Activated CD4-positive, alpha-beta T cell treated with anti-CD3 and anti-CD28 coated beads for 36 hours (primary cell): ENCODE measurements at regions of chr2 and their contacts with region 1.

Region 1: GRCh38 chr2:179031731-179032408 is 18.1 kb downstream of the CCDC141 start:
- DNase-seq: peak; percentile 57
- ATAC-seq: peak; percentile 95
- H3K4me3 Mint-ChIP-seq: peak overlapping the region; percentile 69
- H3K27ac Mint-ChIP-seq: peak overlapping the region; percentile 96
- H3K4me1 Mint-ChIP-seq: peaks cover 28% of the 10 kb centered on the region
- H3K27me3 Mint-ChIP-seq: no peaks in the 10 kb centered on the region

Region 2: GRCh38 chr2:178522950-178523595 is 508.8 kb before region 1 on chr2:
- CTCF ChIA-PET with region 1: no interaction called
- POLR2A ChIA-PET with region 1: no interaction called
- intact Hi-C with region 1: loop called (anchors 2 to 10 kb)
- DNase-seq: peak; percentile 90
- ATAC-seq: peak; percentile 80
- H3K4me3 Mint-ChIP-seq: peak overlapping the region; percentile 85
- H3K27ac Mint-ChIP-seq: peak overlapping the region; percentile 92
- H3K4me1 Mint-ChIP-seq: peaks cover 55% of the 10 kb centered on the region
- H3K27me3 Mint-ChIP-seq: no peaks in the 10 kb centered on the region

Region 3: DNA sequence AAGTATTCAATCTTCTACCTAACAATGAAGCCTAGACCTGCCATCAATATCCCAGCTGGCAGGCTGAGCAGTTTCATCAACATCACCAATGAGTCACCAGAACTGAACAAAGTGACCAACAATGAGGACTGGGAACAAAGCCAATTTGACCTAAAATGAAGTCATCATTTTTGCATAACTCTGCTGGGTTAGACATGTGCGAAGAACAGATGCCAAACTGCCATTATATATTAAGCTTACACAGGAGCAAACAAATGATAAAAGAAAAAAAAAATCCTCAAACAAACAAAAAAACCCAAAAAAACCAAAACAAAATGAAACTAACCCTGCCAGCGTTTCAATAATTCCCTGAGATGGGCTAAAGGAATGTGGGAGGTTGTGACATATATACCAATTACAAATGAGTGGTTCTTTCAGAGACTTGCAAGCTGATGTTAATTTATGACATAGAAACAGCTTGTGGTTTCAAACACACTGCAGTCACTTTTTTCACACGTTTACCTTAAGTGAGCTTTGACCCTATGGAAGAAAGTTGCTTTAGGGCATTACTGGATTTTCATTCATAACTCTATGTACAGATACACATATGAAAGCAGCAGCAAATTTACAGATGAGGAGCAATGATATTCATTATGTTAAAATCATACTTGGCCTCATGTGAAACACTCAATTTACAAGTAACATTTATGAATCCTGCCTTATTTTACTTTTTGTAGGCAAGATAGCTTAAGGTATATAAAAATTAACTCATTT is 75.0 kb after region 1 on chr2:
- CTCF ChIA-PET with region 1: interaction called, 4 read pairs
- POLR2A ChIA-PET with region 1: no interaction called
- intact Hi-C with region 1: loop called (anchors 1 to 2 kb)
- DNase-seq: peak; percentile 30
- ATAC-seq: peak; percentile 50
- H3K4me3 Mint-ChIP-seq: no peak overlapping the region
- H3K27ac Mint-ChIP-seq: peak overlapping the region; percentile 12
- H3K4me1 Mint-ChIP-seq: peaks cover 31% of the 10 kb centered on the region
- H3K27me3 Mint-ChIP-seq: no peaks in the 10 kb centered on the region

Region 4: DNA sequence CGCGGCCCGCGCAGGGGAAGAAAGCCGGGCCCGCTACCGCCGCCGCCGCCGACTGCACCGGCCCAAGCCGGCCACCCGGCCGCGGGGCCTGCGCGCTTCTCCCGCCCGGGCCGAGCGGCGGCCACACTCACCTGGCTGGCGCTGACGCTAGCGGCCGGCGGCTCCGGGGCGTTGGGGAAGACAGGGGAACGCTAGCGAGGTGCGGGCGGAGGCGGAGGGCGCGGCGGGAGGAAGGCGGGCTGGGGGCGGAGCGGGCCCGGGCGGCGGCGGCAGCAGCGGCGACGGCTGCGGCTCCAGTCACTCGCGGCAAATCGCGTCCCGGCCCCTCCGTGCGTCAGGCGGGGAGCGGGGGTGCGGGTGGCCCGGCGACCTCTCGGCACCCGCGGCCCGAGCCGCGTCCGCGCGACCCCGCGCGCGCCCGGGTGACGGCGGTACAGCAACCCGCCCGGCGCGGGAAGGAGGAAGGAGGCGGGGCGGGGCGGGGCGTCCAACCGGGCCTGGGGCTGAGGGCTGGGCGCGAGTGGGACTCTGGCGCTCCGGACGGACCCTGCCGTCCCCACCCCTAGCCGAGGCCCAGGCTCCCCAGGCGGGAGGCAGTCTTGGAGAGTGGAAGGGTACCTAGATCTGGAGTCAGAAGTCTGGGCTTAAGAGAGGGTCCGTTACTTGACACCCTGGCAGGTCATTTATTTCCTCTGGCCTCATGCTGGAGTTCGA is 232.7 kb after region 1 on chr2 and contains the start of gene SESTD1:
- CTCF ChIA-PET with region 1: no interaction called
- POLR2A ChIA-PET with region 1: no interaction called
- intact Hi-C with region 1: loop called (anchors 5 to 10 kb)
- DNase-seq: peak; percentile 75
- ATAC-seq: peak; percentile 65
- H3K4me3 Mint-ChIP-seq: peak within 1 kb of the TSS; percentile 80
- H3K27ac Mint-ChIP-seq: peak within 1 kb of the TSS; percentile 48
- H3K4me1 Mint-ChIP-seq: peaks cover 20% of the 10 kb centered on the region
- H3K27me3 Mint-ChIP-seq: peaks cover 20% of the 10 kb centered on the region
- total RNA-seq, gene SESTD1: 9.4 to 9.6 TPM